CD4-positive, alpha-beta memory T cell (primary cell): ENCODE measurements at regions of chr16 and their contacts with region 1.

Region 1: DNA sequence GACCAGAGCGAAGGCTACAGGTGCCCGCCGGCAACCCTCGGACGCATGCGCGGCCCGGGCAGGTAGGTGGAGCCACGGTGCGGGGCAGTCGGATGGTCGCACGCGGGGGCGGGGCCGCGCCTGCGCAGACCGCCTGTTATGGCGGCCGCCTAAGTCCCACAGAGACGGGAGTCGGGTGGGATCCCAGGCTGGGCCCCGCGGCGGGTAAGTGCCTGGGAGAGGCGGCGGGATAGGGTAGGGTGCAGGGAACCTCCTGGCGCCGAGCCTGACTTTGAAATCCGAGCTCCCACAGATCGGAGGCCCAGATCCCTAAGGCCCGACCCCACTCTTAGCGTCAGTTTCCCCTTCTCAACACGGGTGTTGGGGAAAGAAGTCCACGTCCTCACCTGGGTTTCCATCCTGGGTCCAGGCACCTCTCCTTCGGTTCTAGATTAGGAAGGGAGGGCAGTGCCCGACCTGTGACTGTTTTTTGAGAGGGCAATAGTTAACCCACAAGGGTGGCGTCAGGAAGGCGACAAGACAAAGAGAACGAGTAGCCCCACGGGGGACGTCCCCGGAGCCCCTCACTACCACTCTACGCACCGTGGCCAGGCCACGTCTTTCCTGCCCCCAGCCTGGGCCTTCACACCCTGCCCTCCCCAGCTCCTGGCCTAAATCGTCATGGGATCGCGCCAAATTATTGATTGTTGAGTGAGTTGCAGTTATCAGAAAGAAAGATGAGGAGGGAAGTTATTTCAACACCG is at the start of gene METTL22:
- DNase-seq: peak; percentile 87 to 90 (median 90)
- H3K4me3 ChIP-seq: peak within 1 kb of the TSS; percentile 71 to 96
- H3K4me3 Mint-ChIP-seq: peak within 1 kb of the TSS; percentile 89 to 98 (median 94)
- H3K27ac ChIP-seq: peak within 1 kb of the TSS; percentile 92
- H3K27ac Mint-ChIP-seq: peak within 1 kb of the TSS; percentile 77 to 94 (median 91)
- H3K4me1 ChIP-seq: peaks cover 15% of the 10 kb centered on the region
- H3K4me1 Mint-ChIP-seq: peaks cover 11 to 32% (median 15%) of the 10 kb centered on the region in 4 donors
- H3K27me3 ChIP-seq: no peaks in the 10 kb centered on the region
- H3K27me3 Mint-ChIP-seq: peaks cover 0 to 5% of the 10 kb centered on the region in 2 donors
- total RNA-seq, gene METTL22: 42.9 to 49.8 TPM

Region 2: GRCh38 chr16:8674413-8675022 is 52.8 kb after region 1 on chr16 and contains the start of gene ABAT:
- CTCF ChIA-PET with region 1: no interaction called
- POLR2A ChIA-PET with region 1: interaction called, 3 read pairs
- intact Hi-C with region 1: loop called (anchors 2 kb)
- DNase-seq: peak; percentile 85 to 92 (median 88)
- H3K4me3 ChIP-seq: peak within 1 kb of the TSS; percentile 85 to 87
- H3K4me3 Mint-ChIP-seq: peak within 1 kb of the TSS; percentile 87 to 95 (median 91)
- H3K27ac ChIP-seq: peak within 1 kb of the TSS; percentile 62
- H3K27ac Mint-ChIP-seq: peak within 1 kb of the TSS; percentile 87 to 98 (median 92)
- H3K4me1 ChIP-seq: peaks cover 17% of the 10 kb centered on the region
- H3K4me1 Mint-ChIP-seq: peaks cover 8 to 24% (median 16%) of the 10 kb centered on the region in 4 donors
- H3K27me3 ChIP-seq: no peaks in the 10 kb centered on the region
- H3K27me3 Mint-ChIP-seq: no peaks in the 10 kb centered on the region
- total RNA-seq, gene ABAT: 10.0 to 10.8 TPM

Region 3: GRCh38 chr16:8797364-8798173 is 175.8 kb after region 1 on chr16 and contains the starts of genes PMM2 and TMEM186:
- CTCF ChIA-PET with region 1: no interaction called
- POLR2A ChIA-PET with region 1: no interaction called
- intact Hi-C with region 1: loop called (anchors 1 kb)
- DNase-seq: peak; percentile 93 to 97 (median 94)
- H3K4me3 ChIP-seq: peak within 1 kb of the TSS; percentile 73 to 97
- H3K4me3 Mint-ChIP-seq: peak within 1 kb of the TSS; percentile 93 to 98 (median 95)
- H3K27ac ChIP-seq: peak within 1 kb of the TSS; percentile 81
- H3K27ac Mint-ChIP-seq: peak within 1 kb of the TSS; percentile 88 to 97 (median 94)
- H3K4me1 ChIP-seq: peaks cover 44% of the 10 kb centered on the region
- H3K4me1 Mint-ChIP-seq: peaks cover 24 to 55% (median 33%) of the 10 kb centered on the region in 4 donors
- H3K27me3 ChIP-seq: no peaks in the 10 kb centered on the region
- H3K27me3 Mint-ChIP-seq: no peaks in the 10 kb centered on the region
- total RNA-seq, gene PMM2: 51.7 to 61.7 TPM
- total RNA-seq, gene TMEM186: 15.6 to 17.9 TPM